ENCODE measurements at regions of chr19 and their contacts with region 1.

Region 1: GRCh38 chr19:13022859-13023636 is 27.8 kb downstream of the NFIX start:
- DNase-seq: peak; percentile 94
- ATAC-seq: peak; percentile 39
- H3K4me3 ChIP-seq: peak overlapping the region; percentile 82
- H3K27ac ChIP-seq: peak overlapping the region; percentile 68
- H3K4me1 ChIP-seq: peaks cover 67% of the 10 kb centered on the region
- H3K27me3 ChIP-seq: no peaks in the 10 kb centered on the region
- CTCF ChIP-seq: no peak

Region 2: GRCh38 chr19:11179716-11180297 is 1843.2 kb before region 1 on chr19:
- CTCF ChIA-PET with region 1: no interaction called
- POLR2A ChIA-PET with region 1: no interaction called
- intact Hi-C with region 1: no loop called
- DNase-seq: no peak
- ATAC-seq: no peak
- H3K4me3 ChIP-seq: no peak overlapping the region
- H3K27ac ChIP-seq: no peak overlapping the region
- H3K4me1 ChIP-seq: peaks cover 7% of the 10 kb centered on the region
- H3K27me3 ChIP-seq: no peaks in the 10 kb centered on the region
- CTCF ChIP-seq: no peak

Region 3: GRCh38 chr19:12983542-12984142 is 39.4 kb before region 1 on chr19:
- CTCF ChIA-PET with region 1: interaction called, 3 read pairs
- POLR2A ChIA-PET with region 1: interaction called, 33 read pairs
- intact Hi-C with region 1: loop called (anchors 5 kb)
- DNase-seq: peak; percentile 89
- ATAC-seq: peak; percentile 84
- H3K4me3 ChIP-seq: peak overlapping the region; percentile 61
- H3K27ac ChIP-seq: no peak overlapping the region
- H3K4me1 ChIP-seq: no peaks in the 10 kb centered on the region
- H3K27me3 ChIP-seq: no peaks in the 10 kb centered on the region
- CTCF ChIP-seq: peak; percentile 94

Region 4: GRCh38 chr19:13001502-13002165 is 21.4 kb before region 1 on chr19:
- CTCF ChIA-PET with region 1: no interaction called
- POLR2A ChIA-PET with region 1: interaction called, 4 read pairs
- intact Hi-C with region 1: loop called (anchors 1 kb)
- DNase-seq: no peak
- ATAC-seq: no peak
- H3K4me3 ChIP-seq: no peak overlapping the region
- H3K27ac ChIP-seq: no peak overlapping the region
- H3K4me1 ChIP-seq: peaks cover 10% of the 10 kb centered on the region
- H3K27me3 ChIP-seq: no peaks in the 10 kb centered on the region
- CTCF ChIP-seq: no peak

Region 5: GRCh38 chr19:13012690-13013608 is 10.1 kb before region 1 on chr19:
- CTCF ChIA-PET with region 1: interaction called, 16 read pairs
- POLR2A ChIA-PET with region 1: interaction called, 9 read pairs
- intact Hi-C with region 1: loop called (anchors 1 kb)
- DNase-seq: peak; percentile 78
- ATAC-seq: peak; percentile 21
- H3K4me3 ChIP-seq: peak overlapping the region; percentile 75
- H3K27ac ChIP-seq: peak overlapping the region; percentile 81
- H3K4me1 ChIP-seq: peaks cover 48% of the 10 kb centered on the region
- H3K27me3 ChIP-seq: no peaks in the 10 kb centered on the region
- CTCF ChIP-seq: no peak

Region 6: DNA sequence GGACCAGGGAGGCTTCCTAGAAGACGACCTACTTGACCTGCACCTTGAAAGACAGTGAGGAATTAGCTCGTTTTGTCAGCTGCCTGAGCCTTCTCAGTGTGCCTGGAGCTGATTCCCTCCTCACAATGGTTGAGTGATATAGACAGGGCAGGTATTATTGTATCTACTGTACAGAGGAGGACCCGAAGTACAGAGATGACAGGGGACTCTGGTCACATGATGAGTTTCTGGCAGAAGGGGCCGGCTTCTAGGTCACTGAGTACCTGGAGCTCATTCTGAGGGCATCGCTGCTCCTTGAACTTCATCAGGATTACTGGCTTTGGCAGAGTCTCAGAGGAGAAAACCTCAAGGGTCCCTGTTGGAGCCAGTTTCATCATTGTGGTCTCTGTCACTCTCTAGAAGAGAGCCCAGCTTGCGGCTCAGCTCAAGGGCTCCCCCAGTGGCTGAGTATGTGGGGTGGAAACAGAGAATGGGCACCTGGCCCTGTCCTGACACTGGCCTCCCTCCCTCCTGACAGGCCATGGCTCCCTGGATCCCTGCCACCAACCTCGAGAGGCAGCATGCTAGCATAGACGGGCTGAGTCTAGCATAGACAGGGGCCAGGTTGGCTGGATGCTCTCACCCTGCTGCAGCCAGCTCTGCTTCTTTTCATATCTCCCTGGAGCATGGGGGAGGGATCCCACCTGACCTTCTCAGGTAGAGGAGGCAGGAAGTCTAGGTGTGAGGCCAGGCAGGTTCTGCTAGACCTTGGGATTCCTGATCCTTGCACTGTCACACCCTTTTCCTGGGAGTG is 11.0 kb after region 1 on chr19:
- CTCF ChIA-PET with region 1: interaction called, 6 read pairs
- POLR2A ChIA-PET with region 1: no interaction called
- intact Hi-C with region 1: loop called (anchors 1 kb)
- DNase-seq: peak; percentile 79
- ATAC-seq: peak; percentile 29
- H3K4me3 ChIP-seq: no peak overlapping the region
- H3K27ac ChIP-seq: peak overlapping the region; percentile 85
- H3K4me1 ChIP-seq: peaks cover 71% of the 10 kb centered on the region
- H3K27me3 ChIP-seq: no peaks in the 10 kb centered on the region
- CTCF ChIP-seq: peak; percentile 94

Region 7: GRCh38 chr19:13060964-13061927 is 38.2 kb after region 1 on chr19:
- CTCF ChIA-PET with region 1: interaction called, 15 read pairs
- POLR2A ChIA-PET with region 1: interaction called, 6 read pairs
- intact Hi-C with region 1: no loop called
- DNase-seq: peak; percentile 95
- ATAC-seq: peak; percentile 75
- H3K4me3 ChIP-seq: peak overlapping the region; percentile 65
- H3K27ac ChIP-seq: peak overlapping the region; percentile 8; the same call in 1 of the 2 replicates
- H3K4me1 ChIP-seq: peaks cover 31% of the 10 kb centered on the region
- H3K27me3 ChIP-seq: no peaks in the 10 kb centered on the region
- CTCF ChIP-seq: peak; percentile 99

Region 8: GRCh38 chr19:13093407-13094105 is 70.5 kb after region 1 on chr19:
- CTCF ChIA-PET with region 1: no interaction called
- POLR2A ChIA-PET with region 1: no interaction called
- intact Hi-C with region 1: no loop called
- DNase-seq: peak; percentile 95
- ATAC-seq: peak; percentile 74
- H3K4me3 ChIP-seq: no peak overlapping the region
- H3K27ac ChIP-seq: no peak overlapping the region
- H3K4me1 ChIP-seq: peaks cover 11% of the 10 kb centered on the region; the same call in 1 of the 2 replicates
- H3K27me3 ChIP-seq: no peaks in the 10 kb centered on the region
- CTCF ChIP-seq: peak; percentile 100

Measured in PC-3 (cell line).